Esophagus muscularis mucosa (tissue), 4 donors: ENCODE measurements at regions of chr6 and their contacts with region 1.

Region 1: DNA sequence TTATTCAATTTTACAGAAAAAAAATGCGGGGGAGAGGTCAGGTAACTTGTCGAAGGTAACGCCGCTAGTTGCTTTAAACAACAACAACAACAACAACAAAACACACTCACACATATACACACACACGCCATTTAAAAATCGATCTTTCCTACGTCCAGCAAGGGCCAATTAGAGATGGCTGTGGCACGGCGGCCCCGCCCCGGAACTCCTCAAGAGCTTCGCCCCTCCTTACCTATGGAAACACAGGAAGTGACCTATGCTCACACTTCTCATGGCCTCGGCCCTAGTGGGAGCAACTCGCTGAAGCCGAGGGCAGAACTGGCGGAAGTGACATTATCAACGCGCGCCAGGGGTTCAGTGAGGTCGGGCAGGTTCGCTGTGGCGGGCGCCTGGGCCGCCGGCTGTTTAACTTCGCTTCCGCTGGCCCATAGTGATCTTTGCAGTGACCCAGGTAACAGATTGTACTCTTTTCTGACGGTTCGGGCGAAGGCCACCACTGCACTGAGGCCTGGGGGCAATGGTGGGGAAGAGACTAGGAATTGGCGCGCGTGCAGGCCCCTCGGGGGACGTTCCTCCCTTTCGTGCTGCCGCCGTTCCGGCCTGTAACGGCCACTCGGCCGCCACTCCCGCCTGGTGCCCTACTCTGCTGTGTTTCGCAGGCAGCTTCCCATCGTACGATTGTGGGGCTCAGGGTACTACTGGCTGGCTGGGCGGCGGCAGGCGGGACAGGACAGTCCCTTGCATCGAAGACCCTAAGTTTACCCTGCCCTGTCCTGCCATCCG is at the start of gene TBP:
- DNase-seq: peak; percentile 98
- H3K4me3 ChIP-seq: peak within 1 kb of the TSS; percentile 82 to 92 (median 86)
- H3K27ac ChIP-seq: peak within 1 kb of the TSS; percentile 86 to 93 (median 91)
- H3K4me1 ChIP-seq: peaks cover 42 to 68% (median 52%) of the 10 kb centered on the region in 4 donors
- H3K27me3 ChIP-seq: no peaks in the 10 kb centered on the region
- CTCF ChIP-seq: peak in 1 of 3 experiments; percentile 11
- EP300 ChIP-seq: no peak
- POLR2A ChIP-seq: no peak
- total RNA-seq, gene TBP: 13.1 to 17.8 (median 16.7) TPM

Region 2: DNA sequence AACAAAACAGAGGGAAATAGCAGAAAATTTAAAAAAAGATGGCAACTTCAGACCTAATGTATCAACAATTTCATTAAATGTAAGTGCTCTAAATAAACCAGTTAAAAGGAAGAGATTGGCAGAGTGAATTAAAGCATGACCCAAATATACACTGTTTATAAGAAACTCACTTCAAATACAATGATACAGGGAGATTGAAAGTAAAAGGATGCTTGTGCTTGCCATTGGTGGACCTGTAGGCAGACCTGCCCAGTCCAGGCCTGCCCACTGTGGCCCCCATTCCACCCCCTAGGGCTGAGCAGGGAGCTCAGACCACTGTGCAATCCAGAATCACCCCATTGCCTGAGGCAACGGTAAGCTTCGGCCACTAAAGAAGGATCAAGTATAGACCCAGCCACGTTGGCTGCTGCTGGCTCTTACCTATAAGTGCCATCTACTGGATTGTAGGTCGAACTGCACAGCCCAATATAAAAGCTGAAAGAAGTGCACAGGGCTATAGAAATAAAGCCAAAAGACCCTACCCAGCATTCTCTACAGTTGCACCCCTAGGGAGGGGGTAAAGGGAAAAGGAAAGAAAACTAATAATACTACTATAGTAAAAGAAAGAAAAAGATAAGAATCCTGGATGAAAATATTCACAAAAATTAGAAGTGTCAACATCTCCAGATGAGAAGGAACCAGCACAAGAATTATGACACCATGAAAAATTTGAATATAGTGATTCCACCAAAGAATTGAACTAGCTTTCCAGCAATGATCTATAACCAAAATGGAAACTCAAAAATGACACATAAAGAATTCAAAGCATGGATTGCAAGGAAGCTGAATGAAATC is 37.2 kb before region 1 on chr6:
- intact Hi-C with region 1: no loop called
- DNase-seq: no peak
- H3K4me3 ChIP-seq: no peak overlapping the region
- H3K27ac ChIP-seq: no peak overlapping the region
- H3K4me1 ChIP-seq: no peaks in the 10 kb centered on the region
- H3K27me3 ChIP-seq: no peaks in the 10 kb centered on the region
- CTCF ChIP-seq: peak; percentile 30 to 65 (median 41)
- EP300 ChIP-seq: no peak
- POLR2A ChIP-seq: no peak

Region 3: GRCh38 chr6:170584181-170584953 is 30.2 kb after region 1 on chr6 and contains the start of gene PDCD2:
- intact Hi-C with region 1: loop called (anchors 2 kb)
- DNase-seq: peak; percentile 96
- H3K4me3 ChIP-seq: peak within 1 kb of the TSS; percentile 80 to 99 (median 93)
- H3K27ac ChIP-seq: peak within 1 kb of the TSS; percentile 79 to 95 (median 88)
- H3K4me1 ChIP-seq: peaks cover 14 to 22% (median 19%) of the 10 kb centered on the region in 4 donors
- H3K27me3 ChIP-seq: no peaks in the 10 kb centered on the region
- CTCF ChIP-seq: no peak
- EP300 ChIP-seq: no peak
- POLR2A ChIP-seq: no peak
- total RNA-seq, gene PDCD2: 46.7 to 56.0 (median 53.2) TPM